Activated T-helper 1 cell treated with anti-CD3 and anti-CD28 coated beads, Interleukin-12 subunit alpha, Interleukin-12 subunit beta, Interleukin-2, Interleukin-4 antibody, amounts not matched to agents 30 ng/mL and 10 ng/mL and 1 ng/mL, durations not matched to agents 14 hours and 24 hours and 36 hours (primary cell): ENCODE measurements at regions of chr13 and their contacts with region 1.

Region 1: GRCh38 chr13:50130123-50130946 is 115.1 kb downstream of the KCNRG start:
- DNase-seq: no peak
- H3K4me3 Mint-ChIP-seq: peak overlapping the region; percentile 83
- H3K27ac Mint-ChIP-seq: peak overlapping the region; percentile 94
- H3K4me1 Mint-ChIP-seq: peaks cover 56% of the 10 kb centered on the region
- H3K27me3 Mint-ChIP-seq: peaks cover 41% of the 10 kb centered on the region

Region 2: GRCh38 chr13:50075619-50076097 is 54.7 kb before region 1 on chr13:
- intact Hi-C with region 1: no loop called
- DNase-seq: no peak
- H3K4me3 Mint-ChIP-seq: peak overlapping the region; percentile 40
- H3K27ac Mint-ChIP-seq: peak overlapping the region; percentile 19
- H3K4me1 Mint-ChIP-seq: peaks cover 58% of the 10 kb centered on the region
- H3K27me3 Mint-ChIP-seq: no peaks in the 10 kb centered on the region

Region 3: DNA sequence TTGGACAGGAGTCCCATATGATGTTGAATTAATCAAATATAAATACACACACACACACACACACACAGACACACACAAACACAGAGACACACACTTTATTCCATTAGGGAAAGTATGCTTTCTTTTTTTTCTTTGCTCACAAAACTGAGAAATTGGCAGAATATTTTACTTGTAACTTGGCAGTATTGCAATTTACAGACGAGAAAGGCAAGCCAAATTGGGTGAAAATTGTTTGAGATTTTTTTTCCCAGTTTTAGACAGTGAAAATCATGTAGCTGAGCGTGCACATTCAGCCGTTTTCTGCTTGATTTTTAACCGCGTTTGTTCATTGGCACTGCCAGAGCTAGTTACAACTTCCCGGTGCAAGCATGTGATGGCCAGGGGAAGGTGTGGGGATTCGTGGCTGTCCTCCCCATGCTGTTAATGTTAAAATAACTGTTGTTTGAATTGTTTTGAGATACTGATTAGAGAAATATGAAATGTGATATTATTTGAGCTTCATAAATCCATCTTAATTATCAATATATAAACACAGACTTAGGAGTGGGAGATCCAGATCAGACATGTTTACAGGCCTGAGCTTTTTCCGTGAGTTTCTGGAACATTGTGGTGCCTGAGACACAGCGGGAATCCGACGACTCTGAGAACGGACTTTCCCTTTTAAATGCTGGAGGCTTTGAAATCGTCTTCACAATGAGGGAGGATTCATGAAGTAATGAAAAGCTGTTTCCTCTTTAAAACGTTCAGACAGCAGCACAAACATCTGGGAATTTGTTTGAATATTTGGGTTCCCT is 10.4 kb after region 1 on chr13:
- intact Hi-C with region 1: loop called (anchors 1 kb)
- DNase-seq: no peak
- H3K4me3 Mint-ChIP-seq: no peak overlapping the region
- H3K27ac Mint-ChIP-seq: no peak overlapping the region
- H3K4me1 Mint-ChIP-seq: peaks cover 8% of the 10 kb centered on the region
- H3K27me3 Mint-ChIP-seq: peaks cover 58% of the 10 kb centered on the region

Region 4: DNA sequence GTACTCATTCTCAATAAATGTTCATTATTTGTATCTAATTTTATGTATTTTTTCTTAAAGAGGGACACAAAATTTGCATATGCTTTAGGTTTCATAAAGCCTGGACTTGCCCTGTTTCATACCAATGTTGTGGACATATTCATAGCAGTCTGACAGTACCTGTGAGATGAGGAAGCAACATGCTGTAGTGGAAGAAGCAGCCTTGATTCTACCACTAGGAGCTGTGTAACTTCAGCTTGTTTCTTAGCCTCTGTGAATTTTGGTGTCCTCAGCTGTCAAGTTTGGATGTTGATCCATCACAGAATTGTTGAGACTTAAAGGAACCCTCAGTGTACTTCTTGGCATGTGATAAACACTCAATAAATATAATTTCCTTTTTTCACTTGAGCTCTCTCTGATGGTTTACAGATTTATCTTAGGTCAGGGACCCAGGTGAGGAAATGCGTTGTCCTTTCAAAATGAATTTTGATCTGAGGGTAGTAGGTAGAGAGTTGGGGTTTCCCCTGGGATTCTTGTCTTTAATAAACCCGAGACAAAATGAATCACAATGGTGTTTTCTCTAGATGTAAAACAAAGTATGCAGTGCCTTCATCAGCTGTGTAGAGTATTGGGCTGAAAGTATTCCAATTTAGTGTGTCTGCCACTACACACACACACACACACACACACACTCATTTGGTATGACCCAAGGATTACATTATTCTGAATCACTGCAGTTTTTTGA is 37.1 kb after region 1 on chr13:
- intact Hi-C with region 1: loop called (anchors 2 kb)
- DNase-seq: no peak
- H3K4me3 Mint-ChIP-seq: no peak overlapping the region
- H3K27ac Mint-ChIP-seq: no peak overlapping the region
- H3K4me1 Mint-ChIP-seq: peaks cover 10% of the 10 kb centered on the region
- H3K27me3 Mint-ChIP-seq: peaks cover 20% of the 10 kb centered on the region

Region 5: GRCh38 chr13:50236898-50237318 is 106.6 kb after region 1 on chr13:
- intact Hi-C with region 1: loop called (anchors 1 kb)
- DNase-seq: peak; percentile 45
- H3K4me3 Mint-ChIP-seq: peak overlapping the region; percentile 27
- H3K27ac Mint-ChIP-seq: peak overlapping the region; percentile 78
- H3K4me1 Mint-ChIP-seq: peaks cover 59% of the 10 kb centered on the region
- H3K27me3 Mint-ChIP-seq: peaks cover 22% of the 10 kb centered on the region

Region 6: GRCh38 chr13:50529154-50529882 is 399.0 kb after region 1 on chr13:
- intact Hi-C with region 1: loop called (anchors 5 kb)
- DNase-seq: no peak
- H3K4me3 Mint-ChIP-seq: no peak overlapping the region
- H3K27ac Mint-ChIP-seq: peak overlapping the region; percentile 59
- H3K4me1 Mint-ChIP-seq: peaks cover 45% of the 10 kb centered on the region
- H3K27me3 Mint-ChIP-seq: peaks cover 19% of the 10 kb centered on the region